Activated CD4-positive, alpha-beta T cell treated with anti-CD3 and anti-CD28 coated beads, Interleukin-2, amount 10 ng/mL, durations not matched to agents 24 days and 14 days (primary cell): ENCODE measurements at regions of chr10 and their contacts with region 1.

Region 1: GRCh38 chr10:72260588-72261322 is 13.0 kb upstream of the DDIT4 start:
- DNase-seq: peak; percentile 96
- H3K4me3 Mint-ChIP-seq: peak overlapping the region; percentile 85
- H3K27ac Mint-ChIP-seq: peak overlapping the region; percentile 98
- H3K4me1 Mint-ChIP-seq: peaks cover 50% of the 10 kb centered on the region
- H3K27me3 Mint-ChIP-seq: no peaks in the 10 kb centered on the region

Region 2: GRCh38 chr10:72215652-72216549 is 44.9 kb before region 1 on chr10 and contains the starts of genes ANAPC16 and ASCC1:
- intact Hi-C with region 1: loop called (anchors 2 kb)
- DNase-seq: peak; percentile 99
- H3K4me3 Mint-ChIP-seq: peak within 1 kb of the TSS; percentile 96
- H3K27ac Mint-ChIP-seq: peak within 1 kb of the TSS; percentile 100
- H3K4me1 Mint-ChIP-seq: peaks cover 30% of the 10 kb centered on the region
- H3K27me3 Mint-ChIP-seq: peaks cover 1% of the 10 kb centered on the region
- total RNA-seq, gene ANAPC16: 73.2 and 74.3 TPM in 2 replicates
- total RNA-seq, gene ASCC1: 33.6 and 34.1 TPM in 2 replicates

Region 3: DNA sequence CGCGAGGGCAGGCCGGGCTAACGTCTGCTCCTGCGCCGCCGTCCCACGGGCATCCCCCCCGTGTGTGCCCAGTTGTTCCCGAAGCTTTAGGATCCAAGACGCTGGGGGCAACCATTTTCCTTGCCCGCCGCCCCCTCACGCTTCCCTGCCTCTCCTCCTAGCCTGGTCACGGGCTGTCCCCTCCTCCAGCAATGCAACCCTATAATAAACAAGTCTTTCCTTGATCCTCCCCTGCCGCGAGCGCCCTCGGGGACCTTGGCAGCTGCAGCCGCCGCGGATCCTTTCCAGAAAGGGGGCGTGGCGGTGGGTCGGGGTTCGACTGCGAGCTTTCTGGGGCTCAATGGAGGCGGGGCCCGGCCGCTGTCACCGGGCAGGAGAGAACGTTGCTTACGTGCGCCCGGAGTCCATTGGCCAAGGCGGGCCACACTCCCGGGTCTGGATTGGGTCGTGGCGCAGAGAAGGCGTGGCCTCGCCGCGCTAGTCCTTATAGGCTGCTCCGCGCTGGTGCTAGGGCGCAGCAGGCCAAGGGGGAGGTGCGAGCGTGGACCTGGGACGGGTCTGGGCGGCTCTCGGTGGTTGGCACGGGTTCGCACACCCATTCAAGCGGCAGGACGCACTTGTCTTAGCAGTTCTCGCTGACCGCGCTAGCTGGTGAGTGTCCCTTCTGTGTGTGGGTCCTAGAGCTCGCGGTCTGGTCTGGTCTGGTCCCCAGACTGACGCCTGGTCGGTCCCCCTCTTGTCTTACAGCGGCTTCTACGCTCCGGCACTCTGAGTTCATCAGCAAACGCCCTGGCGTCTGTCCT is 12.9 kb after region 1 on chr10 and contains the start of gene DDIT4:
- intact Hi-C with region 1: loop called (anchors 1 kb)
- DNase-seq: peak; percentile 100
- H3K4me3 Mint-ChIP-seq: peak within 1 kb of the TSS; percentile 96
- H3K27ac Mint-ChIP-seq: peak within 1 kb of the TSS; percentile 92
- H3K4me1 Mint-ChIP-seq: peaks cover 51% of the 10 kb centered on the region
- H3K27me3 Mint-ChIP-seq: no peaks in the 10 kb centered on the region
- total RNA-seq, gene DDIT4: 260 and 271 TPM in 2 replicates

Region 4: DNA sequence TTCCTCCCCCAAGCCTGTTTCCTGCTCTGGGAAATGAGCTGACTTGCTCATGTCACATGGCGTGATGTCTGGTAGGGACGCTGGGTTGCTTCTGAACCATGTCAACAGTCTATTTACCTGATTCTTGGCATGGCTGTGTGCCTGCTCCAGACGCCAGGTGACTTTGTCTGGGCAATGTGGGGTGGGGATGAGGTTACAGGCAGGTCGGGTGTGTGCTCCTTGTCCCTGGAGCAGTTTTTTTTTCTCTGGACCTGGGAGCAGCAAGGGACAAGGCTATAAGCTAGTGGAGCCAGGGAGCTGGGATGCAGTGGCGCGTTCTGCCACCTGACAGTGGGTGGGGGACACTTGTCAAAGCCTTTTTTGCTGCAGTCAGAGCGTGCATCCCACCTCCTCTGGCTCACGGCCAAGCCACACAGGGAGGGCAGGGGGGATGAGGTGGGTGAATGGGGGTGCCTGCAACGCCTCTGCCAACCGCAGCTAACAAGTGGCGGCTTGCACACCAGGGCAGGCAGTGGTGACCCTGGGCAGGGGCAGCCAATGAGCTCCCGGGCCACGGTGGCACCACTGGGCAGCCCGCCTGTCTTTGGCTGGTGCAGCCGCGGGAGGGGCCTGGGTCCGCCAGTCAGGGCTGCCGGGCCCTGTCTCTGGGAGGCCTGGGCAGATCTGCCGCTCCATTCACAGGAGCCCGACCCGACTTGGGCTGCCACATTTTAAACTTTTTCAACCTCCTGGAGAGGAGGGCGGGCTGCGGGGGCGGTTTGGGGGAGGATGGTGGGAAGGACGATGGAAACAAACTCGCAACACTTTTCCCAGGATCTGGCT is 71.1 kb after region 1 on chr10:
- intact Hi-C with region 1: loop called (anchors 1 kb)
- DNase-seq: peak; percentile 93
- H3K4me3 Mint-ChIP-seq: peak overlapping the region; percentile 88
- H3K27ac Mint-ChIP-seq: peak overlapping the region; percentile 99
- H3K4me1 Mint-ChIP-seq: peaks cover 81% of the 10 kb centered on the region
- H3K27me3 Mint-ChIP-seq: no peaks in the 10 kb centered on the region

Region 5: DNA sequence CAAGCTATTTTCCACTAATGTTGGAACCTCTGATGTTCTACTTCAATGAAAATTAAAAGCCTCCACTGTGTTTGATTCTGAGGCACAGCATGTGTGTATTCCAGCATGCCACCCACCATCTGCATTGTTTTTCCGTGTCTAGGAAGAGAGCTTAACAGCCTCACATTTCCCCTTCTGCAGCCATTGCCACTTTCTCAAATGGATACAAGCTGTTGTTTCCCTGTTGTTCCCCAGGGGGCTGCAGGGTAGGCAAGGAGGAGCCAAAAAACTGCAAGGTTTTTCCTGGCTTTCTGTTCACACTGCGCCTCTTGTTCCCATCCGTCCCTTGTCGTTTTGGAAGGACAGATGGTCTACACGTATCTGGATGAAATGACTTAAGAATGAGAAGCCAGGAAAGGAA is 166.2 kb after region 1 on chr10:
- intact Hi-C with region 1: no loop called
- DNase-seq: no peak
- H3K4me3 Mint-ChIP-seq: no peak overlapping the region
- H3K27ac Mint-ChIP-seq: no peak overlapping the region
- H3K4me1 Mint-ChIP-seq: no peaks in the 10 kb centered on the region
- H3K27me3 Mint-ChIP-seq: no peaks in the 10 kb centered on the region

Region 6: DNA sequence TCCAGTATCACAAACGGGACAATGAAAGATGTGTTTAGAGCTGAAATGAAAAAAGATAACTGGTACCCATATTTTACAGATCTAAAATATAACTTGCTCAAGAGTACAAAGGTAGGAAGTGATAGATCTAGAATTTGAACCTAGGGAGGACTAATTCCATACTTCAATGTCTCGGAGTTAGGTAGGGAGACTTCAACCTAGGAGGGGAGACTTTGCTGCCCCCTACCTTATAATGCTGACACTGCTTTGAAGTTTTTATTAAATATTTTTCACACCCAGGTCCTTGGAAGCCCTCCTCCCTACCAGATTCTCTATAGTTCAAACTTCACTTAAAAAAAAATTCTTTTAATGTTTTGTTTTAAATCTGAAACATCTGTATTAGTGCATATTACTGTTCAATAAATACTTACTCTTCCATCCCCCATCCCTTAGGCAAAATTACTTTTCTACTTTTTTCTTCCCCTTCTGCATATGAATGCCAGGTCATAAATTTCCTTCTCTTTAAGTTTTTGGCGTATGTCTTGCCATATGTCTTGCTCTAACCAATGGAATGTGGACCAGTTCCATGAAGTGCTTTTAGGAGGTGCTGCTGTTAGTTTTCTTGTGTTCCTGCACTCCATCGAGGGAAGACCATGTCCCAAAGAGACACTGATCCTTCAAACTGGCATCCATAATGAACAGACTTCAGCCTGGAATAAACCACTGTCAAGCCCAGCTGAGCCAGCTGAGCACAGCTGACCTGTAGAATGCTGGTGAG is 307.3 kb after region 1 on chr10:
- intact Hi-C with region 1: no loop called
- DNase-seq: no peak
- H3K4me3 Mint-ChIP-seq: no peak overlapping the region
- H3K27ac Mint-ChIP-seq: no peak overlapping the region
- H3K4me1 Mint-ChIP-seq: peaks cover 22% of the 10 kb centered on the region
- H3K27me3 Mint-ChIP-seq: no peaks in the 10 kb centered on the region